ENCODE measurements at regions of chr15 and their contacts with region 1.

Region 1: GRCh38 chr15:32659340-32660155 is 18.0 kb downstream of the SCG5 start:
- DNase-seq: no peak
- ATAC-seq: peak; percentile 15

Region 2: GRCh38 chr15:32861761-32862160 is 202.2 kb after region 1 on chr15:
- intact Hi-C with region 1: no loop called
- DNase-seq: peak; percentile 34 to 35
- ATAC-seq: no peak

Region 3: DNA sequence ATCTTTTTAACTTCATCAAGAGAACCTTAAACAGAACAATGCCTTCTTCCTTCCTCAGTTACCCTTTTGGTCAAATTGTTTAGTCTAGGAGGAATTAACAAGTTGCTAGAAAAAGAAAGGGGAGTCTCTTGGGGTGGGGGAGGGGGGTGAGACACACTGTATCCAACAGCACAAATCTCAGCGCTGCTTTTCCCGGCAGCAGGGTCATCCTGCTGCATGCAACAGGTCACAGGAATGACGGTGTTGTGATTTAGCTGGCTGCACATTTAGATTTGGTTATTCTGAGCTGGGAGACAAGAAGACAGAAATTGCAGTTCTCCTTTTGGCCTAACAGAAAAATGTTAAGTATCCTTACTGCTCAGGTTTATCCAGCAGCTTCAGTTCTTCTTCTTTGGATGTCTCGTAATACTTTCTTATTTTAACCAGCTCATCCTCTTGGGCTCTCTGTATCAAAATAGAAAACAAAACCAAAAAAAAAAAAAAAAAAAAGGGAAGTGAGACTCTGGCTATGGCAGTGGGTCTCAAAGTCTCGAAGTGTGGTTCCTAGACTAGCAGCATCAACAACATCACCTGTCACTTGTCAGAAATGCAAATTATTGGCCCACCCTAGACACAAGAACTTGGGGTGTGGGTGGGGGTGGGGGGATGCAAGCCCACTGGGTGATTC is 248.7 kb after region 1 on chr15:
- intact Hi-C with region 1: no loop called
- DNase-seq: no peak
- ATAC-seq: peak; percentile 14

Region 4: DNA sequence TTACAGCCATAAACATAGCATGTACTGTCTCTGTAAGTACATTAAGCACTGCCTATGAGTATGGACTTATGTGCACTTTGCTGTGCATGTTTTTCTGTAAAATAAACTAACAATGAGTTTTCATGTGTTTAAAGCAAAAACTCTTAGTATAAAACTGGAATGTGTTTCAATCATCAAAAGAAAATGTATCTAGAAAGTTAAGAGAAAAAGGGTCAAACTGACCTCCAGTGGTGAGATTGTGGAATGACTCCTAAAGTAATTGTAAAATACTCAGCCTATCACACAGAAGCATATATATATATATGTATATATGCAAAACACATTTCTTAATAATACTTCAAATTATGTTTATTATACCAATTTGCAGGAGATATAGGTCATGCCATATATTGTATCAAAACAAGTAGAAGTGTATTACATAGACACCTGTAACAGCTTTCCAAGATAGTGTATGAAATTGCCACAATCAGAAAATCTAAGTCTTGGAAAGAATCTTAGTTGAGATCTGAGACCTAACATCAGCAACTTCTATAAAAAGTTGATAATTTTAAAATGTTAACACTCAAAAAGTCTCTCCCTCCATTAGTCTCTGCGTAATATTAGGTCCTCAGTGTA is 335.4 kb after region 1 on chr15:
- intact Hi-C with region 1: loop called in 1 of 2 experiments (anchors 5 kb)
- DNase-seq: no peak
- ATAC-seq: peak; percentile 59